BJ (cell line): ENCODE measurements at regions of chr10 and their contacts with region 1.

Region 1: GRCh38 chr10:72126184-72126871 is 38.0 kb upstream of the SPOCK2 start:
- DNase-seq: no peak
- H3K4me3 ChIP-seq: no peak overlapping the region
- H3K27me3 ChIP-seq: no peaks in the 10 kb centered on the region
- CTCF ChIP-seq: peak; percentile 50

Region 2: DNA sequence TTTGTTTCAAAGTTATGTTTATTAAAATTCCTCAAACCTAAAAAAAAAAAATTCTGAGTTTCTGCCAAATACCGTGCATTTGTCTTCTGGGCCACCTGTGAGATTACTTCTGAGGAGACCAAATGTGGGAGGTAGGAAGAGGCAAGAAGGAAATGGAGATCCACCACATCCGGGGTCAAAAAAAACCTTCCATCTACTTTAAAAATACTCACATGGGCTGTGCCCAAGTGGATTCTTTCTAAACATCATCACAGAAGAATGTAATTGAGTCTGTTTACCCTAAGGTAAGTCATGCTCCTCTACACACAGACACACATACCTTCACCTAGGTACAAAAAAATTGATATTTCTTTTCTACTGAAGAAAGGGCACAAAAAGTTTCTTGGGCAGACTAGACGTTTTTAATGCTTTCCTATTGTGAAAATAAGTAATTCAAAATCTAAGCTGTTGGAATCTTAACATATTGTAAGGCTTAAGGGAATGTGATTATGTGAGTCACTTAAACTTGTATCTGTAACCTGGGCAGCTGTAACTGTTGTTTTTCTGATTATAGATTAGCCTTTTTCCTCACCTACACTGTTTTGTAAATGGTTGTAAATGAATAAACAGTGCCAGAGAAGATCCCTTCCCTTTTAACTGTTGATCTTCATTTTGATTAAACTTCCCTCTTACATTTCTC is 18.9 kb before region 1 on chr10:
- CTCF ChIA-PET with region 1: interaction called, 12 read pairs
- POLR2A ChIA-PET with region 1: no interaction called
- DNase-seq: no peak
- H3K4me3 ChIP-seq: no peak overlapping the region
- H3K27me3 ChIP-seq: no peaks in the 10 kb centered on the region
- CTCF ChIP-seq: no peak

Region 3: GRCh38 chr10:72218325-72218724 is 92.0 kb after region 1 on chr10:
- CTCF ChIA-PET with region 1: interaction called, 42 read pairs
- POLR2A ChIA-PET with region 1: no interaction called
- DNase-seq: no peak
- H3K4me3 ChIP-seq: no peak overlapping the region
- H3K27me3 ChIP-seq: no peaks in the 10 kb centered on the region
- CTCF ChIP-seq: no peak

Region 4: DNA sequence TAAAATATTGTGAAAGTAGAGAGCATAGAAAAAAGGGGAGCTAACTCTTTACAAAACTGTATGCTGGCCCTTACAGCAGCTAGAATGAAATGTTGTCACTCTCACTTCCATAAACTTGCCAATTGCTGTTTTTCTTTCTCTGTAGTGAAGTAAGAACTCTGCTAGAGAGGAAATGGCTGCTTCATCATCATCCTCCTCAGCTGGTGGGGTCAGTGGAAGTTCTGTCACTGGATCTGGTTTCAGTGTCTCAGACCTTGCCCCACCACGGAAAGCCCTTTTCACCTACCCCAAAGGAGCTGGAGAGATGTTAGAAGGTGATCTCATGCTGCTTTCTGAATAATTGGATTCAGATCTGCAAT is 97.4 kb after region 1 on chr10:
- CTCF ChIA-PET with region 1: interaction called, 42 read pairs
- POLR2A ChIA-PET with region 1: no interaction called
- DNase-seq: no peak
- H3K4me3 ChIP-seq: no peak overlapping the region
- H3K27me3 ChIP-seq: no peaks in the 10 kb centered on the region
- CTCF ChIP-seq: no peak

Region 5: GRCh38 chr10:72273410-72274212 is 147.3 kb after region 1 on chr10 and contains the start of gene DDIT4:
- CTCF ChIA-PET with region 1: interaction called, 11 read pairs
- POLR2A ChIA-PET with region 1: no interaction called
- DNase-seq: peak; percentile 97
- H3K4me3 ChIP-seq: peak within 1 kb of the TSS; percentile 89
- H3K27me3 ChIP-seq: no peaks in the 10 kb centered on the region
- CTCF ChIP-seq: no peak
- polyA plus RNA-seq, gene DDIT4: 152 and 174 TPM in 2 replicates

Region 6: GRCh38 chr10:72308320-72308987 is 182.1 kb after region 1 on chr10:
- CTCF ChIA-PET with region 1: no interaction called
- POLR2A ChIA-PET with region 1: no interaction called
- DNase-seq: no peak
- H3K4me3 ChIP-seq: no peak overlapping the region
- H3K27me3 ChIP-seq: no peaks in the 10 kb centered on the region
- CTCF ChIP-seq: no peak

Region 7: DNA sequence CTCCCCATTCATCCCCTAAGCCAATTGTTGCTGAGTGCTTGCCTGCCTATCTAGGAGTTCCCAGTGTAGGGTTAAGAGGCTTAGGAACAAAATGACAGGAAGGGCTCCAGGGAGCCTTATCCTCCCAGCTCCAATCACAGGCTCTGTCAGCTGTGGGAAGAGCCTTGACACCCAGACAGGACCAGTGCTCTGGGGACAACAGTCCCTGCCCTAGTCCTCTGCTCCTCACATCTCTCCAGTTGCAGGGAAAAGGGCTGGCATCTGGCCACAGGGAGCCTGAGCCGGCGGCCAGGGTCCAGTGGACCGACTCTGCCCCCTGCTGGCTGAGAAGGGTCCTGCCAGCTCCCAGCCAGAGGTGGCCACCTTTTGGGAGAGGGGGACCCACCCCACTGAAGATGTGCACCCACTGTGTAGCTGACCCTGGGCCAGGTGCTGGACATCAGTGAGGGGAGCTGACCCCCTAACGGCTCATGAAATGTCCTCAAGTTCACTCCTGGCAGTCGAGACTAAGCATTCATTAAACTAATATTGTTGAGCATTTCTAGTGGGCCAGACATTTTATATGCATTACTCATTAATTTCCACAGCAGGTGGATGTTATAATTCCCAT is 210.8 kb after region 1 on chr10:
- CTCF ChIA-PET with region 1: interaction called, 22 read pairs
- POLR2A ChIA-PET with region 1: no interaction called
- DNase-seq: no peak
- H3K4me3 ChIP-seq: no peak overlapping the region
- H3K27me3 ChIP-seq: no peaks in the 10 kb centered on the region
- CTCF ChIP-seq: peak; percentile 95